ENCODE measurements at regions of chr10 and their contacts with region 1.

Region 1: GRCh38 chr10:29496341-29497162 is 138.2 kb downstream of the SVIL start:
- DNase-seq: peak; percentile 41 to 81 (median 64)
- H3K4me3 ChIP-seq: no peak overlapping the region
- H3K27ac ChIP-seq: no peak overlapping the region
- H3K27me3 ChIP-seq: peaks cover 0 to 11% (median 0%) of the 10 kb centered on the region in 45 donors
- CTCF ChIP-seq: peak; percentile 58 to 98 (median 89)

Region 2: GRCh38 chr10:28628184-28628893 is 868.2 kb before region 1 on chr10:
- intact Hi-C with region 1: loop called in 1 of 2 experiments (anchors 5 kb)
- DNase-seq: peak; percentile 66 to 86 (median 80)
- H3K4me3 ChIP-seq: peak overlapping the region in 3 of 59 donors; percentile 10 to 19 (median 19)
- H3K27ac ChIP-seq: no peak overlapping the region
- H3K27me3 ChIP-seq: peaks cover 0 to 14% (median 0%) of the 10 kb centered on the region in 45 donors
- CTCF ChIP-seq: peak; percentile 75 to 96 (median 92)

Region 3: GRCh38 chr10:29386342-29386999 is 110.1 kb before region 1 on chr10:
- intact Hi-C with region 1: no loop called
- DNase-seq: no peak
- H3K4me3 ChIP-seq: peak overlapping the region in 5 of 59 donors; percentile 24 to 48 (median 33)
- H3K27ac ChIP-seq: no peak overlapping the region
- H3K27me3 ChIP-seq: peaks cover 0 to 6% (median 0%) of the 10 kb centered on the region in 45 donors
- CTCF ChIP-seq: peak; percentile 47 to 89 (median 79)

Region 4: DNA sequence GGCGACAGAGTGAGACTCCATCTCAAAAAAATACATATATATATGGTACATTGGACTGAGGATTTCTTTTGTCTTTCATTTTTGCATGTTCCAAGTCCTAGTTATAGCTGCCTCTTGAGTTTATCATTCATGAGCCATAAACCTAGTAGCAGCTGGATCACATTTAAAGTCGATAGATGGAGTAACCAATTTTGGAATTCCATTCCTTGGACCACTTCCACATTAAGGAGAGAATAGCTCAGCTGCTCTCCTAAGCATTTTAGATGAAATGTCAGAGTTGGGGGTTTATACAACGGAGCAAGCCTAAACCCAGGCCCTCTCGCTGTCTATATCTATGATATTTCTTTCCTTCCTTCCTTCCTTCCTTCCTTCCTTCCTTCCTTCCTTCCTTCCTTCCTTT is 66.5 kb before region 1 on chr10:
- intact Hi-C with region 1: no loop called
- DNase-seq: no peak
- H3K4me3 ChIP-seq: no peak overlapping the region
- H3K27ac ChIP-seq: no peak overlapping the region
- H3K27me3 ChIP-seq: no peaks in the 10 kb centered on the region
- CTCF ChIP-seq: no peak

Region 5: GRCh38 chr10:29535012-29535777 is 38.6 kb after region 1 on chr10:
- intact Hi-C with region 1: no loop called
- DNase-seq: peak in 8 of 10 donors; percentile 44 to 72 (median 60)
- H3K4me3 ChIP-seq: peak overlapping the region in 44 of 59 donors; percentile 2 to 64 (median 28)
- H3K27ac ChIP-seq: peak overlapping the region in 49 of 59 donors; percentile 3 to 85 (median 64)
- H3K27me3 ChIP-seq: peaks cover 0 to 4% (median 0%) of the 10 kb centered on the region in 45 donors
- CTCF ChIP-seq: peak; percentile 38 to 85 (median 68)